Activated naive CD4-positive, alpha-beta T cell treated with anti-CD3 and anti-CD28 coated beads for 36 hours (primary cell): ENCODE measurements at regions of chr1 and their contacts with region 1.

Region 1: GRCh38 chr1:70410604-70411359 is at the start of gene CTH:
- DNase-seq: peak; percentile 95
- H3K4me3 Mint-ChIP-seq: peak within 1 kb of the TSS; percentile 98
- H3K27ac Mint-ChIP-seq: peak within 1 kb of the TSS; percentile 81
- H3K4me1 Mint-ChIP-seq: peaks cover 16% of the 10 kb centered on the region
- H3K27me3 Mint-ChIP-seq: no peaks in the 10 kb centered on the region
- total RNA-seq, gene CTH: 30.3 to 36.1 TPM

Region 2: GRCh38 chr1:70134148-70134547 is 276.6 kb before region 1 on chr1:
- CTCF ChIA-PET with region 1: no interaction called
- intact Hi-C with region 1: loop called (anchors 1 kb)
- DNase-seq: no peak
- H3K4me3 Mint-ChIP-seq: no peak overlapping the region
- H3K27ac Mint-ChIP-seq: no peak overlapping the region
- H3K4me1 Mint-ChIP-seq: no peaks in the 10 kb centered on the region
- H3K27me3 Mint-ChIP-seq: peaks cover 4% of the 10 kb centered on the region

Region 3: DNA sequence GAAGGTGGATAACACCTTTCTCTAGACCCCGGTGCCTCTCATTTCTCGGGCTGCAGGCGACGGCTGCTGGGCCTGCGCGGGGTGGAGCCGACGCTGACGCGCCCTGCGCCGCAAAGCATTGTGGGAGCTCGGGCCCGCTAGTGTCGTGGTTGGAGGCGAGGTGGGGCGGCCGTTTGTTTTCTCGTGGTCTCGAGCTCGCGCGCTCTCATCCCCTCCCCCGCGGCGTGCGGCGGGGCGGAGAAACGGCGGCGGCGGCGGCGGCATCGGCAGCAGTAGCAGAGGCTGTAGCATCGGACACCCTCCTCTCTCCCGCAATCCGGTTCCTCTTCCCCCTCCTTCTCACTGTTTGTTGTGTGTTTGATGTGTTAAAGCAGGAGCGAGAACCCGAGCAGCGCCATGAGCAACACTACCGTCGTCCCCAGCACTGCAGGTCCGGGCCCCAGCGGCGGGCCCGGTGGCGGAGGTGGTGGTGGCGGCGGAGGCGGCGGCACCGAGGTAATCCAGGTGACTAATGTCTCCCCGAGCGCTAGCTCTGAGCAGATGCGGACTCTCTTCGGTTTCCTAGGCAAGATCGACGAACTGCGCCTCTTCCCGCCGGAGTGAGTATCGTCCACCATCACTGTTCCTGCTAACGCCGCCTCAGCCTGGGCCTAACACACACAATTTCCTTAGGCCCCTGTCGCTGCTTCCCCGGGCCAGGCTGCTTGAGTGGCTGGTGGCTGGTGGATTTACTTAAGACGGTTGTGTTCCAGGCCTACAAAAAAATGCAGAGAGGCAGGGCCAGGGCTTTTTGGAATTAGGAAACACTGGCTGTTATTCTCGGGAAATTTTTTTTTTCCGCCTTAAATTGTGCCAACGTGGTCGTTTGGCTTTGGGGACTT is 189.3 kb before region 1 on chr1 and contains the start of gene SRSF11:
- CTCF ChIA-PET with region 1: no interaction called
- intact Hi-C with region 1: loop called (anchors 1 kb)
- DNase-seq: peak; percentile 97
- H3K4me3 Mint-ChIP-seq: peak within 1 kb of the TSS; percentile 93
- H3K27ac Mint-ChIP-seq: peak within 1 kb of the TSS; percentile 97
- H3K4me1 Mint-ChIP-seq: peaks cover 39% of the 10 kb centered on the region
- H3K27me3 Mint-ChIP-seq: no peaks in the 10 kb centered on the region
- total RNA-seq, gene SRSF11: 172 to 173 TPM

Region 4: DNA sequence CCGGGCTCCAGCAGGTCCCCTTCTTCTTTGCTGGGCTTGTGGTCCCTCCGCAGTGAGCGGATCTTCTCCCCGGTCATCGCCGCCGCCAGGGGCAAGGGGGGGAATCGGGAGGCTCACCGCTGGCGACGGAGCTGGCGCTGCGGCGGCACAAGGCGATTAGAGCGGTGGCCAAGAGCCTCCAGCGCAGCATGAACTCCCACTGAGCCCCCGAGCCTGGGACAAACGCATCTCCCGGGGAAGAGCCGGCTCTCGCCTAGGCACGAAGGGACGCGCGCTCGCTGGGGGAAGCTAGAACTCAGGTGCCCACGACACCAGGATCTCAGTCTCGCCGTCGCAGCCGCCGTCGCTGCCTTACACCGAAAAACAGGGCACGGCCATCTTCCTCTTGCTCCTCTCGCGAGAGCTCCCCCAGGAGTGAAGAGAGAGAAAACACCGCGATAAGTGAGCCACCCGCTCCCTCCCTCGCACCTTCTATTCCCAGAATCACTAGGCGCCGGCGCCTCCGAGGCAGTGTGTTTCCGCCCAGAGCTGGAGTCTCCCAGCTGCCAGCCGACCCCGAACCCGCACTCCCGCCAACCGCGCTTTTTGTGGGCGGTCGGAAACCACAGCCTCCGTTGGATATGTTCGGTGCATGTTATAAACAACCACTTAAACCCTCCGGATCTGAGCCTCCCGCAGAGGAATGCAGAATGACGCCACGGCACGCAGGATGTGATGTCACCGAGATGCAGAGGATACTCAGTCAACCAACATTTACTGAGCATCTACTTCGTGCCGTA is 56.3 kb before region 1 on chr1 and contains the start of gene ANKRD13C:
- CTCF ChIA-PET with region 1: interaction called, 14 read pairs
- intact Hi-C with region 1: loop called (anchors 1 kb)
- DNase-seq: peak; percentile 97
- H3K4me3 Mint-ChIP-seq: peak within 1 kb of the TSS; percentile 98
- H3K27ac Mint-ChIP-seq: peak within 1 kb of the TSS; percentile 99
- H3K4me1 Mint-ChIP-seq: peaks cover 36% of the 10 kb centered on the region
- H3K27me3 Mint-ChIP-seq: no peaks in the 10 kb centered on the region
- total RNA-seq, gene ANKRD13C: 9.2 to 10.3 TPM

Region 5: GRCh38 chr1:70764747-70765146 is 354.0 kb after region 1 on chr1:
- CTCF ChIA-PET with region 1: no interaction called
- intact Hi-C with region 1: no loop called
- DNase-seq: no peak
- H3K4me3 Mint-ChIP-seq: no peak overlapping the region
- H3K27ac Mint-ChIP-seq: no peak overlapping the region
- H3K4me1 Mint-ChIP-seq: no peaks in the 10 kb centered on the region
- H3K27me3 Mint-ChIP-seq: no peaks in the 10 kb centered on the region

Region 6: DNA sequence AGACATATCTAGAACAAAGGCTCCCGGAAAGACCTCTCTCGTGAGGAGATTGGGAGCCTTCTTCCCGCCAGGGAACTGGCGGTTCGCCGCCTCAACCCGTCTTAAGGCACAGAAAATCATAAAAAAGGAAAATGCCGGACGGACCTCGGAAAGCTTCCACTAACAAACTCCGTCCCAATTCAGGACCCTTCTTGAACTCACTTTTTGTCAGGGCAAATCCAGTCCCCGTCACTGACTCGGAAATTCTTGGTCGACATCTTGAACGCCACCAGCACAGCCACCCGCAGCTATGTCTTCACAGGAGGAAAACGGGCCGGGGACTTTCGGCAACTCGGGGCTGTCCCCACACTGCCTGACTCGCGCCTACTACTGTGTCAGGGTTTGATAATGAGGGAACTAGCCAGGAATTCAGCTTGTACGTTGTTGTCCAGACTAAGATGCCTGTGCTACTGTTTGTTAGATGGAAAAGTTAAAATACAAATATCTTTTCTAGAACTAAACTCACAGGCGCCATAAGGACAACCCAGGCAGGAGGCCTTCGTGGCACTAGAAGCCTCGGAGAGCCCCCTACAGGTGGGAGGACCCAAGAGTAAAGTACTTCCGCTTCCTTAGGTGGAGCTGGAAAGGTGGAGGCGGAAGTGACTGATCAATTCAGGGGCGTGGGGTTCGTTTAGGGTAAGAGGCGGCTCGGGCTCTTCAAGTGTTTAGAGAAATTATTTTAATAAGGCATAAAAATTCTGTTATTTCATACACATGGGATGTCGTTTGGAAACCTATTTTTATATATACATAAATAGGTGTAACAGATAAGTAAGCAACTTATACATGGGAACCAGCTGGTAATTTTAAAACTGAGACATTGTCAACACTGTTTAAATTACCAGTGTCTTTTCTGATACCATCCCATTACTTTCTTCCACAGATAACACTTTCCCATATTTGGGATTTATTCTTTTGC is 670.2 kb after region 1 on chr1 and contains the start of gene ZRANB2:
- CTCF ChIA-PET with region 1: interaction called, 3 read pairs
- intact Hi-C with region 1: loop called (anchors 1 kb)
- DNase-seq: peak; percentile 93
- H3K4me3 Mint-ChIP-seq: peak within 1 kb of the TSS; percentile 84
- H3K27ac Mint-ChIP-seq: peak within 1 kb of the TSS; percentile 99
- H3K4me1 Mint-ChIP-seq: peaks cover 23% of the 10 kb centered on the region
- H3K27me3 Mint-ChIP-seq: peaks cover 12% of the 10 kb centered on the region
- total RNA-seq, gene ZRANB2: 107 to 114 TPM